ENCODE measurements at regions of chr6 and their contacts with region 1.

Region 1: DNA sequence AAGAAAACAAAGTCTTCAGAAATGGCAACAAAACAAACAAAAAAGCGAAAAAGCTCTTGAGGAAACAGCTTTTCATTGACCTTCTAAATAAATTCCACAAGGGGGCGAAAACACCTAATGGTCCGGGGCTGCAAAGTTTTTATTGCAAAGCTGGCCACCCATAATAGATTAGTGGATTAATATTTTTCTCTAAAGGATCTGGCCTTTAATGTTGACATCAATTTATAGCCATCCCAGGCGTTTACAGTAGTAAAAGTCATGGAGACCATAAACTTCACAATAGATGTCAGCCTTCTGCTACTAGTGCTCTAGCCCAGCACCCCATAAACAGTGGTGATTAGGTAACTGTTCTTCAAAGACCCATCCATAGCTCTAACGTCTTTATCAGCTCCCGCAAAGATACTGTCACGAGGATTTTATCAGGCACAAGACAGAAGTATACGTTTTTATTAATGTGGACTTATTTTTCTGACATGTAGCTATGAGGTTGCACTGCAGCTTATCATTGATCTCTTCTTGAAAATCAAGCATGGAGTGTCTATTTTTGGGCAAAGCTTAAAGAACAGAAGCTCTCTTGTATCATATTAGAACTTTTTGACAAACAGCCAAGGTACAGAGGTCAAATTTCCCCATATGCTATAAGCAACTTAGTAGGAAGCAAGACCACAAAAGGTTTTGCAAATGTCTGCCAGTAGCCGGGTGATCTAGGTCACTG is 4.7 kb downstream of the CITED2 start:
- DNase-seq: no peak
- ATAC-seq: no peak
- H3K4me3 Mint-ChIP-seq: no peak overlapping the region
- H3K27ac Mint-ChIP-seq: no peak overlapping the region
- H3K4me1 Mint-ChIP-seq: peaks cover 43% of the 10 kb centered on the region
- H3K27me3 Mint-ChIP-seq: no peaks in the 10 kb centered on the region

Region 2: GRCh38 chr6:138817822-138818308 is 551.9 kb before region 1 on chr6:
- CTCF ChIA-PET with region 1: interaction called, 19 read pairs
- POLR2A ChIA-PET with region 1: no interaction called
- DNase-seq: peak; percentile 21
- ATAC-seq: no peak
- H3K4me3 Mint-ChIP-seq: no peak overlapping the region
- H3K27ac Mint-ChIP-seq: no peak overlapping the region
- H3K4me1 Mint-ChIP-seq: peaks cover 24% of the 10 kb centered on the region
- H3K27me3 Mint-ChIP-seq: no peaks in the 10 kb centered on the region

Region 3: GRCh38 chr6:139407718-139408222 is 38.0 kb after region 1 on chr6:
- CTCF ChIA-PET with region 1: no interaction called
- POLR2A ChIA-PET with region 1: no interaction called
- DNase-seq: no peak
- ATAC-seq: no peak
- H3K4me3 Mint-ChIP-seq: no peak overlapping the region
- H3K27ac Mint-ChIP-seq: no peak overlapping the region
- H3K4me1 Mint-ChIP-seq: no peaks in the 10 kb centered on the region
- H3K27me3 Mint-ChIP-seq: no peaks in the 10 kb centered on the region

Measured in activated CD8-positive, alpha-beta T cell treated with anti-CD3 and anti-CD28 coated beads, Interleukin-2, amount 10 ng/mL, durations not matched to agents 7 days and 5 days (primary cell).